ENCODE measurements at regions of chr3 and their contacts with region 1.

Region 1: GRCh38 chr3:186849374-186849975 is 7.0 kb downstream of the ADIPOQ start:
- DNase-seq: peak in 1 of 2 experiments; percentile 53
- H3K4me3 ChIP-seq: no peak overlapping the region
- H3K4me3 Mint-ChIP-seq: no peak overlapping the region
- H3K27ac Mint-ChIP-seq: no peak overlapping the region
- H3K4me1 ChIP-seq: no peaks in the 10 kb centered on the region
- H3K4me1 Mint-ChIP-seq: peaks cover 6% of the 10 kb centered on the region
- H3K27me3 ChIP-seq: no peaks in the 10 kb centered on the region
- H3K27me3 Mint-ChIP-seq: no peaks in the 10 kb centered on the region
- CTCF ChIP-seq: peak; percentile 41 to 48

Region 2: GRCh38 chr3:186930641-186931531 is 81.4 kb after region 1 on chr3:
- CTCF ChIA-PET with region 1: interaction called, 15 read pairs
- POLR2A ChIA-PET with region 1: no interaction called
- intact Hi-C with region 1: loop called (anchors 1 kb)
- DNase-seq: peak; percentile 67 to 80
- H3K4me3 ChIP-seq: peak overlapping the region; percentile 81
- H3K4me3 Mint-ChIP-seq: peak overlapping the region; percentile 91
- H3K27ac Mint-ChIP-seq: peak overlapping the region; percentile 83
- H3K4me1 ChIP-seq: no peaks in the 10 kb centered on the region
- H3K4me1 Mint-ChIP-seq: peaks cover 5% of the 10 kb centered on the region
- H3K27me3 ChIP-seq: no peaks in the 10 kb centered on the region
- H3K27me3 Mint-ChIP-seq: no peaks in the 10 kb centered on the region
- CTCF ChIP-seq: peak in 1 of 2 experiments; percentile 12

Region 3: DNA sequence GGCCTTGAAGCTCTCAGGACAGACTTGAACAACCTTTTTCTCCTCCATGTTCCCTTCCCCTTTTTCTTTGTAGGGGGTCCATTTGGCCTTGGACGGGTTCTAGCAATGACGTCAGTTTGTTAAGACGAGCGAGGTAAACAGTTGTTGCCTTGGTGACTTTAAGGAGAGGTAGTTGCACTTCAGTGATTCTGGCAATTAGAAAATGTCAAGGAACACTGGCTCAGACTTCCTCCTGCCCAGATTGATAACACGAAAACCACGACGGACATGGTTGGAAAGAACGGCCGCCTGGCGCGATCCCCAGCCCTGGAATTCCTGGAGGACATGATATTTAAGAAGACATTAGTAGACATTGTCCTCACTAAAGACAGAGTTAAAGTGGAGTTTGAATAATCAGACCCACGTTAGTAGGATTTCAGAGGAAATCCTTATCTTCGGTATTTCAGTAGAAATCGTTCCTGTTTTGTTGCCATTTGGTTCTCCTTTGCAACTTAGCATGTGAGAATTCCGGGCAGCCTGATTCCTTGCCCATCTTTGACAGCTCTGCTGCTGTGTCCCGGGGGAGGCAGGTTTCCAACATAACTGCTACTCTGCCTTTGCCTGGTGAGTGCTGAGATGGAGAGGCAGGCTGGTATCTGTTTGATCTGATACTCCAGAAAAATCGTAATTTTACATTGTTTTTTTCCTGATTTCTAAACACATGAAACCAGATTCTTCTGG is 168.2 kb after region 1 on chr3:
- CTCF ChIA-PET with region 1: interaction called, 4 read pairs
- POLR2A ChIA-PET with region 1: no interaction called
- intact Hi-C with region 1: loop called (anchors 1 kb)
- DNase-seq: no peak
- H3K4me3 ChIP-seq: no peak overlapping the region
- H3K4me3 Mint-ChIP-seq: no peak overlapping the region
- H3K27ac Mint-ChIP-seq: no peak overlapping the region
- H3K4me1 ChIP-seq: peaks cover 16% of the 10 kb centered on the region
- H3K4me1 Mint-ChIP-seq: peaks cover 7% of the 10 kb centered on the region
- H3K27me3 ChIP-seq: no peaks in the 10 kb centered on the region
- H3K27me3 Mint-ChIP-seq: no peaks in the 10 kb centered on the region
- CTCF ChIP-seq: no peak

Region 4: GRCh38 chr3:187064196-187065115 is 215.0 kb after region 1 on chr3:
- CTCF ChIA-PET with region 1: interaction called, 3 read pairs
- POLR2A ChIA-PET with region 1: no interaction called
- intact Hi-C with region 1: loop called (anchors 2 kb)
- DNase-seq: peak in 1 of 2 experiments; percentile 13
- H3K4me3 ChIP-seq: no peak overlapping the region
- H3K4me3 Mint-ChIP-seq: peak overlapping the region; percentile 52
- H3K27ac Mint-ChIP-seq: peak overlapping the region; percentile 97
- H3K4me1 ChIP-seq: peaks cover 27% of the 10 kb centered on the region
- H3K4me1 Mint-ChIP-seq: peaks cover 28% of the 10 kb centered on the region
- H3K27me3 ChIP-seq: no peaks in the 10 kb centered on the region
- H3K27me3 Mint-ChIP-seq: no peaks in the 10 kb centered on the region
- CTCF ChIP-seq: no peak

Region 5: GRCh38 chr3:187112934-187113793 is 263.7 kb after region 1 on chr3:
- CTCF ChIA-PET with region 1: interaction called, 6 read pairs
- POLR2A ChIA-PET with region 1: no interaction called
- intact Hi-C with region 1: loop called (anchors 1 kb)
- DNase-seq: no peak
- H3K4me3 ChIP-seq: no peak overlapping the region
- H3K4me3 Mint-ChIP-seq: no peak overlapping the region
- H3K27ac Mint-ChIP-seq: no peak overlapping the region
- H3K4me1 ChIP-seq: no peaks in the 10 kb centered on the region
- H3K4me1 Mint-ChIP-seq: peaks cover 7% of the 10 kb centered on the region
- H3K27me3 ChIP-seq: no peaks in the 10 kb centered on the region
- H3K27me3 Mint-ChIP-seq: peaks cover 2% of the 10 kb centered on the region
- CTCF ChIP-seq: peak; percentile 41 to 63

Region 6: DNA sequence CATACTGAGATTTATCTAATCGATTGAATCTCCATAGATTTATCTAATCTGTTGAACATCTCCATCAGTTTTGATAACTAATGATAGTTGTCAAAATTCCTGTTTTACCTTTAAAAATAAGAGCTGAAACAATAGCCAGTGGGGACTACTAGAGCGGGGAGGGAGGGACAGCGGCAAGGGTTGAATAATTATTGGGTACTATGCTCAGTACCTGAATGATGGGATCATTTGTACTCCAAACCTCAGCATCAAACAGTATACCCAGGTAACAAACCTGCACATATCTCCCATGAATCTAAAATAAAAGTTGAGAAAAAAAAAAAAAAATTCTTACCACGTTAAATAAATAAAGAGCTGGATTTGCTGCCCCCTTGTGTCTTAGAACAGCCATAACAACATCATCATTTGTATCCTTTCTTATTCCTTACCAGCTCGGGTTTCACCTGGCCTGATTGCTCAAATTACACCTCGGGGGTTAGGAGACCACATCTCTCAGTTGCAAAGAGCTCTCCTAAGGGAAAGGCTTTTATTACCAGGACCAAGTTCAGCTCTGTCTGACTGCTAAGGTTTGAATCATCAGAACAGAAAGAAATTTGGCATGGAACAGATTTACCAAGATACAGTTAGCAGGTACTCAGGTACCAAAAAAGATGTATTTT is 315.5 kb after region 1 on chr3:
- CTCF ChIA-PET with region 1: interaction called, 37 read pairs
- POLR2A ChIA-PET with region 1: interaction called, 5 read pairs
- intact Hi-C with region 1: loop called (anchors 1 kb)
- DNase-seq: peak in 1 of 2 experiments; percentile 62
- H3K4me3 ChIP-seq: no peak overlapping the region
- H3K4me3 Mint-ChIP-seq: no peak overlapping the region
- H3K27ac Mint-ChIP-seq: no peak overlapping the region
- H3K4me1 ChIP-seq: no peaks in the 10 kb centered on the region
- H3K4me1 Mint-ChIP-seq: no peaks in the 10 kb centered on the region
- H3K27me3 ChIP-seq: no peaks in the 10 kb centered on the region
- H3K27me3 Mint-ChIP-seq: peaks cover 5% of the 10 kb centered on the region
- CTCF ChIP-seq: peak; percentile 57 to 69